Astrocyte of the cerebellum (primary cell): ENCODE measurements at regions of chr17 and their contacts with region 1.

Region 1: GRCh38 chr17:3907483-3908216 is 8.6 kb downstream of the P2RX1 start:
- DNase-seq: no peak
- H3K4me3 ChIP-seq: no peak overlapping the region
- CTCF ChIP-seq: peak; percentile 9

Region 2: GRCh38 chr17:3818786-3819185 is 88.9 kb before region 1 on chr17:
- in situ Hi-C with region 1: no loop called
- DNase-seq: no peak
- H3K4me3 ChIP-seq: no peak overlapping the region
- CTCF ChIP-seq: no peak

Region 3: GRCh38 chr17:3848186-3848835 is 59.3 kb before region 1 on chr17:
- in situ Hi-C with region 1: no loop called
- DNase-seq: no peak
- H3K4me3 ChIP-seq: no peak overlapping the region
- CTCF ChIP-seq: no peak

Region 4: DNA sequence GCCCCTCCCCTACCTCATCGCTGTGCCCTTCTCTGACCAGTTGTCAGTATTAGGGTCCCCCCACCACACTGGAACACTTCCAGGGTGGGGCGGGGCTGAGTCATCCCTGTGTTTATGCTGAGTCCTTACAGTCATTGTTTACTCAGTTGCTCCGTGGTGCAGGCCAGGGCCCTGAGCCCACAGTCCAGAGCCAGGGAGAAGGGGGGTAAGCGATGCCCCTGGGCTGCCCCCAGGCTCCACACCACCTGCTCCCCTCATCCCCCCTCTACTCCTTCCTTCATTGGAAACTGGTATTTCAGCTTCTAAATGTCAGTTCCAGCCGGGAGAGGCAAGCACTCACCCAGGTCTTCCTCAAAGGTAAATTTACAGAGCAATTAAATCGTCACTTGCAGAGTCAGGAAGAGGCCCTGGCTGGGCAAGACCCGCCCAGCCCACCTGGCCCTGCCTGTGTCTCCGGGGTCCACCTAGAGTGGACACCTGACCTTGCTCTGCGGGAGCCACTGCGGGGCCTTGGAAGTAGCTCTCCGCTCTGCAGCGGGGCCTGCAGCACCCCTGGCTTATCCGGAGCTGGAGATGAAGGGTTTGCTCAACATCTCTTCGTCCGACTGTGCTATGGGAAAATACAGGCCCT is 51.8 kb after region 1 on chr17:
- in situ Hi-C with region 1: loop called (anchors 5 kb)
- DNase-seq: no peak
- H3K4me3 ChIP-seq: no peak overlapping the region
- CTCF ChIP-seq: no peak

Region 5: GRCh38 chr17:4118015-4118743 is 210.5 kb after region 1 on chr17:
- in situ Hi-C with region 1: no loop called
- DNase-seq: no peak
- H3K4me3 ChIP-seq: no peak overlapping the region
- CTCF ChIP-seq: no peak